H1 (cell line): ENCODE measurements at regions of chr13 and their contacts with region 1.

Region 1: DNA sequence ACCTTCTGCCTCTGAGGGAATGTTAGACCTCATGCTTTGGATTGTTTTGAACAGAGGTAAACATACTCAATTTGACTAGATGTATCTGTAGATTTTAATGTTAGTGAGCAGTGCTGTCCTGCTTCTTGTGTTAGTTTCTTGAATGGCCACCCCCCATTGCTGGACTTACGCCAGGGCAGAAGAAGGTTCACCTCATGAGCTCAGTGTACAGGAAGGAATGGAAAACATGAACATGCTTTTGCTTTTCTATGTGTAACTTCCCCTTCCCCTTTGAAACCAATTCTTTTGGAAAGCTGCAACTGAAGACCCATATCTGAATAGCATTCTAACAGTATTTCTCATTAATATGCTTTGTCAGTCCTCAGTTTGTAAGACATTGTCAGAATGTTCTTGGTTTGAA is 32.3 kb downstream of the WASF3 start:
- DNase-seq: no peak
- H3K4me3 ChIP-seq: no peak overlapping the region
- H3K27ac ChIP-seq: no peak overlapping the region
- H3K4me1 ChIP-seq: peaks cover 0 to 3% (median under 1%) of the 10 kb centered on the region in 4 experiments; a peak in 2 of 7 replicates
- H3K27me3 ChIP-seq: peaks cover 0 to 1% (median 0%) of the 10 kb centered on the region in 4 experiments; a peak in 1 of 7 replicates
- CTCF ChIP-seq: no peak
- EP300 ChIP-seq: no peak
- POLR2A ChIP-seq: no peak
- RAD21 ChIP-seq: no peak

Region 2: DNA sequence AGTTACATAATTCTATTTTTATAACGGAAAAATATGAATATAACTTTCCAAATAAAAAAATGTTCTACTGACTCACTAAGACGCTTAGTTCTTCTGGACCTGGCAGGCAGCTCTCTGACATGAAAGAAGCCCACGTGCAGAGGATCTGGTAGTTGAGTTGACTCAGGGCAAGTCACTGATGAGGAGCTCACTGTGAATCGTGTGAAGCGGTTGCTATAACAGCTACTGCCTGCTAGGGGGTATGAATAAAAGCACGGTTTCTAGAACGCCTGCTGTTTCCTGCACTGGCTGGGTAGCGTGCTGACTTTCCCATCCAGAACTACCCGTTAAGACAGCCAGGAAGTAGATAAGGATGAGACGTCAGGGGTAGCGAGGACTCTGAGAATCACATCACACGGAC is 86.9 kb before region 1 on chr13:
- CTCF ChIA-PET with region 1: no interaction called
- POLR2A ChIA-PET with region 1: no interaction called
- DNase-seq: no peak
- H3K4me3 ChIP-seq: no peak overlapping the region
- H3K27ac ChIP-seq: no peak overlapping the region
- H3K4me1 ChIP-seq: peaks cover 0 to 5% (median 2%) of the 10 kb centered on the region in 4 experiments; a peak in 2 of 7 replicates
- H3K27me3 ChIP-seq: no peaks in the 10 kb centered on the region; a peak in 1 of 7 replicates
- CTCF ChIP-seq: peak in 2 of 3 experiments; percentile 12 to 22; a peak in 2 of 4 replicates
- EP300 ChIP-seq: no peak
- POLR2A ChIP-seq: no peak
- RAD21 ChIP-seq: peak; percentile 10 to 17; a peak in 2 of 4 replicates

Region 3: DNA sequence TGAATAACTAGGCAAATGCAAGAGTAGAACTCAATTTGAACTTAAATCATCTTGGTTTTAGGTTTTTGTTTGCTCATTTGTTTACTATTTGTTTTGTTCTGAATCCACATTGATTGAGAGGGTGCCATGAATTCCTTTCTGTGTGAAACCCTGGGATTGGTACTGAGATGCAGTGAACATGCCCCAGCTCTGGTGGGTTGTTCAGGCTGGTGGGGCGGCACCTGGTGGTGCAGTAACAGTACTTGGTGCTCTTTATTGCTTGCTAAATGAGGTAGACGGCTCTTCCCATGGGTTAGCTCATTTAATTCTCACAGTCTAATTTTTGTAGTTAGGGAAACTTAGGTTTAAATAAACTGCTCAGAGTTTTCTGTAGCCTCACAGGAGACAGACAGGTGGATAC is 16.1 kb after region 1 on chr13:
- CTCF ChIA-PET with region 1: interaction called, 10 read pairs
- POLR2A ChIA-PET with region 1: interaction called, 5 read pairs
- DNase-seq: peak in 1 of 2 experiments; percentile 25
- H3K4me3 ChIP-seq: no peak overlapping the region
- H3K27ac ChIP-seq: no peak overlapping the region
- H3K4me1 ChIP-seq: peaks cover 0 to 3% (median 0%) of the 10 kb centered on the region in 4 experiments; a peak in 1 of 7 replicates
- H3K27me3 ChIP-seq: no peaks in the 10 kb centered on the region
- CTCF ChIP-seq: peak; percentile 51 to 62 (median 61)
- EP300 ChIP-seq: no peak
- POLR2A ChIP-seq: no peak
- RAD21 ChIP-seq: peak; percentile 54 to 58